ENCODE measurements at regions of chr17 and their contacts with region 1.

Region 1: DNA sequence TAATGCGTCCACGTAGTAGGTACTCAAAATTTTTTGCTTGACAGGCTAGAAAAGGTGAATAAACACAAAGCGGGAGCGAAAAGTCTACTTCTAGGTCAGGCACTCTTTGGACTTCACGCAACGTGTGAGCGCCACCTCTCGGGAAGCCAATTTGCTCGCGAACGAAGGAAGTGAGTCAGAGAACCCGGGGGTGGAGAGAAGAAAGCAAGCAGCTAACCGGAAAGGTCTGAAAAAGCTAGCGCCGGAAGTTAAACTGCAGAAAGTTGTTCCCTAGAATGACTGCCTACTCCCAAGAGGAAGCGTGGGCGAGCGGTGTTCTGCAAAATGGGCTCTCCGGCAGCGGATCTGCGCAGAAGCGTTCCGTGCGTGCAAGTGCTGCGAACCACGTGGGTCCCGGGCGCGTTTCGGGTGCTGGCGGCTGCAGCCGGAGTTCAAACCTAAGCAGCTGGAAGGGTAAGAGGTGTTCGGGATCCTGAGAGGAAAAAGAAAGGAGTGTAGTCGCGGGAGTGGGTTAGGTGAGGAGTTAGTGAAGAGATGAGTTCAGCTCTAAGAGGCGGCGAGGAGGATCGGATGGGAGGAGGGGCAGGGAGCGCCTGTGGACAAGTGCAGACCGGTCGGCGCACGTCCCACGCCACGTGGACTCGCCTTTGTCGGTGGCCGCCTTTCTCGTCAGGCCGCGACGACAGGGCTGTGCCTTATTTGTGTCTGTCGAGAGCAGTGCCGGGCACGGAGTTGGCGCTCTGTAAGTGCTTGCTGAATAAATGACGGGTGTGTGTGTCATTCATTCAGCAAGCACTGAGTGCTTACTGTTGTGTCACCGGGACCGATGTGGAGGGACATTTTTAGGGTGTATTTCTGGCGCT is at the start of gene NME1:
- DNase-seq: peak; percentile 96
- CTCF ChIP-seq: peak; percentile 81

Region 2: GRCh38 chr17:51000835-51001638 is 152.4 kb before region 1 on chr17:
- in situ Hi-C with region 1: loop called (anchors 5 kb)
- DNase-seq: peak; percentile 56
- CTCF ChIP-seq: peak; percentile 30